Astrocyte of the cerebellum (primary cell): ENCODE measurements at regions of chr19 and their contacts with region 1.

Region 1: DNA sequence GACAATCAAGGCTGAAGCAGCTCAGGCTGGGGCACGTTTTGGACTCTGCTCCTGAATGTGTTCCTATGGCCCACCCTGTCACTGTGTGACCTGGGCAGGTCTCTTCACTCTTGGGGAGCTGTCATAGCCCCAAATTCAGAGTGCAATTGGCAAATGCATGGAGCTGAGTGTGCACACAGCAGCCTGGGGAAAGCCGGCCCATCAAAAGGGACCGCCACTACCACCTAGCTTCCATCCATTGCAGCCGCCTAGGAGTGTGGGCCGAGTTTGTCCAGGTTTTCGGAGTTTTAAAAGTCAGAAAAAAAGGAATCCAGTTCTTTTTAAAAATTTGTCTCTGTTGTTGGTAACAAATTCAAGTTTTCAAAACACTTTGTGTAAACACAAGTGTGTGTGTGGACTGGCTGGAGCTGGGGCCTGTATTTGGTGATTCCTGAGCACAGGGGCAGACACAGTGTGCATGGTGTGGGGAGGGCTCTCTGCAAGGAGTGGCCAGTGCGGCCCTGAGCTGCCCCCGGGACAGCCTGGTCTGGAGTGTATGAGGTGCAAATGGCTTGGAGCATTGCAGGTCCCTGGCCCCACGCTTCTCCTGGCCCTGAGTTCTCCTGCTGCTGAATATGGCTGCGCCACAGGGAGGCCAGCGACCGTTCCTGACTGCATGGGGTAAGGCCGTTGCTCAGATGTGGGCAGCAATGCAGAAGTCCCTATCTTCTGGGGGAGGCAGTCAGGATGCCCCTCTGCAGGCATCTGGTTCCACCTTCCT is 13.2 kb upstream of the ZNF536 start:
- DNase-seq: no peak
- H3K4me3 ChIP-seq: no peak overlapping the region
- CTCF ChIP-seq: no peak

Region 2: GRCh38 chr19:30304540-30304939 is 54.5 kb before region 1 on chr19:
- in situ Hi-C with region 1: no loop called
- DNase-seq: no peak
- H3K4me3 ChIP-seq: no peak overlapping the region
- CTCF ChIP-seq: no peak

Region 3: DNA sequence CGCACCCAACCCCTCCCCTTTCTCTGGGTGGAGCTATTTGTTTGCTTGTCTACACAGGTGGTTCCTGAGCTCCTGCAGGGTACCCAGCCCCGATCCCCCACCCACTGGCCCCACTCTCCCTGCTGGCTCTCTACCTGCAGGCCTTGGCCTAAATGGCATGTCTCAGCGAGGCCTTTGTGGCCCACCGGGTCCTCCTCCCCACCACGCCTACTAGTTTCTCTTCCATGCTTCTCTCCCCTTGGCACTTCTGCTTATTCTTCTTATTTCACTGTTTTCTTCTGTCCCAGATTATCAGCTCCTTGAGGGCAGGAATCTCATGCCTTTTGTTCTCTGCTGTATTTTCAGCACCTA is 44.2 kb before region 1 on chr19:
- in situ Hi-C with region 1: no loop called
- DNase-seq: no peak
- H3K4me3 ChIP-seq: no peak overlapping the region
- CTCF ChIP-seq: no peak

Region 4: GRCh38 chr19:30406220-30407067 is 47.4 kb after region 1 on chr19:
- in situ Hi-C with region 1: loop called (anchors 5 kb)
- DNase-seq: no peak
- H3K4me3 ChIP-seq: no peak overlapping the region
- CTCF ChIP-seq: peak; percentile 15